ENCODE measurements at regions of chr19 and their contacts with region 1.

Region 1: DNA sequence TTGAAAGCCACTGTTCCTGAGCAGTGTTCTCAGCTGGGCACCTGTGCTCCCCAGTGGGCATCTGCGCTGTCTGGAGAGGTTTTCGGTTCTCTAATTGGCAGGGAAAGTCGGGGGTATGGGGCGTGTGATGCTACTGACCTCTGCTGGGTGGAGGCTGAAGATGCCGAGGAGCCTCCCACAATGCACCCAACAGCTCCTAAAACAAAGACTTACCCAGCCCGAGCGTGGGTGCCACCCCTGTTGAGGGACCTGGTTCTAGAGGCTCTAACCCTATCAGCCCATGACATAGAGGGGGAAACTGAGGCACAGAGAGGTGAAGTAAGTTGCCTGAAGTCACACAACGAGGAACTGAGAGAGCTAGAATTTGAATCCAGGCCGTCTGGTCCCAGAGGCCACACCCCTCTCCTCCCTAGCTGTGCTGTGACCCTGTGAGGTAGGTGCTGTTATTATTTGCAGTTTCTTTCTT is 2.3 kb downstream of the SPACA4 start:
- DNase-seq: peak; percentile 57 to 63 (median 60)
- H3K4me3 ChIP-seq: no peak overlapping the region
- H3K4me3 Mint-ChIP-seq: peak overlapping the region in 6 of 8 donors; percentile 24 to 73 (median 53)
- H3K27ac ChIP-seq: no peak overlapping the region
- H3K27ac Mint-ChIP-seq: peak overlapping the region in 5 of 7 donors; percentile 22 to 94 (median 73)
- H3K4me1 ChIP-seq: no peaks in the 10 kb centered on the region
- H3K4me1 Mint-ChIP-seq: peaks cover 2 to 6% (median 5%) of the 10 kb centered on the region in 4 donors
- H3K27me3 ChIP-seq: no peaks in the 10 kb centered on the region
- H3K27me3 Mint-ChIP-seq: no peaks in the 10 kb centered on the region

Region 2: GRCh38 chr19:48271531-48272151 is 337.2 kb before region 1 on chr19:
- CTCF ChIA-PET with region 1: interaction called, 3 read pairs
- POLR2A ChIA-PET with region 1: no interaction called
- intact Hi-C with region 1: loop called (anchors 2 kb)
- DNase-seq: no peak
- H3K4me3 ChIP-seq: peak overlapping the region in 1 of 2 donors; percentile 19
- H3K4me3 Mint-ChIP-seq: peak overlapping the region; percentile 70 to 90 (median 80)
- H3K27ac ChIP-seq: no peak overlapping the region
- H3K27ac Mint-ChIP-seq: peak overlapping the region in 2 of 7 donors; percentile 63 to 70
- H3K4me1 ChIP-seq: peaks cover 4% of the 10 kb centered on the region
- H3K4me1 Mint-ChIP-seq: peaks cover 5 to 24% (median 15%) of the 10 kb centered on the region in 4 donors
- H3K27me3 ChIP-seq: no peaks in the 10 kb centered on the region
- H3K27me3 Mint-ChIP-seq: peaks cover 8 to 12% of the 10 kb centered on the region in 2 donors

Region 3: DNA sequence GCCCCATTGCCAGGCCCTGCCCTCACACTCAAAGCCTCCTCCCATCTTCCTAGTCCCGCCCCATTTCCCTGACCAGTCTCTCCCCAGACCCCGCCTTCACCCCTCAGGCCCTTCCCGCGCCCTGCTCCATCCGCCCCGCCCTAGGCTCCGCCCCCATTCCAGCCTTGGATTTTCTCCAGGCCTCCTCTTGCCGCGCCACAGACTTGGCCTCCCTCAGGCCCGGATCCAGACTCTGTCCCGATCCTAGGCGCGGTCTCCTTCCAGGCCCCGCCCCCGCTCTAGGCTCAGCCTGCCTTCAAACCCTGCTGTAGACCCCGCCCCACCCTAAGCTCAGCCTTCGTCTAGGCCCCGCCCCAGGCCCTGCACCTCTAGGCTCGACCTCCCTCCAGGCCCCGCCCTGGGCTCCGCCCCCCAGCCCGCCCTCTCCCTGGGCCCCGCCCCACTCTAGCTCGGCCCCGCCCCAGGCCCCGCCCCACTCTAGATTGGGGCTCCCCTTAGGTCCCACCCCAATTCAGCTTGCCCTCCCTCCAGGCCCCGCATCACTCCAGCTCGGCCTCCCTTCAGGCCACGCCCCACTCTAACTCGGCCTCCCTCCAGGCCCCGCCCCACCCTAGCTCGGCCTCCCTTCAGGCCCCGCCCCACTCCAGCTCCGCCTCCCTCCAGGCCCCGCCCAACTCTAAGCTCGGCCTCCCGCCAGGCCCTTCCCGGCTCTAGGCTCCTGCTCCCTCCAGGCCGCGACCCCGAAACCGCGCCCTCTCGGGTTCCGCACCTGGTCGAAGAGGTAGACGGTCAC is 115.7 kb before region 1 on chr19:
- CTCF ChIA-PET with region 1: interaction called, 53 read pairs
- POLR2A ChIA-PET with region 1: interaction called, 6 read pairs
- intact Hi-C with region 1: loop called (anchors 1 kb)
- DNase-seq: peak; percentile 75 to 87 (median 77)
- H3K4me3 ChIP-seq: peak overlapping the region in 1 of 2 donors; percentile 47
- H3K4me3 Mint-ChIP-seq: peak overlapping the region; percentile 52 to 79 (median 70)
- H3K27ac ChIP-seq: no peak overlapping the region
- H3K27ac Mint-ChIP-seq: peak overlapping the region in 5 of 7 donors; percentile 51 to 84 (median 60)
- H3K4me1 ChIP-seq: peaks cover 40% of the 10 kb centered on the region
- H3K4me1 Mint-ChIP-seq: peaks cover 15 to 53% (median 28%) of the 10 kb centered on the region in 4 donors
- H3K27me3 ChIP-seq: peaks cover 15% of the 10 kb centered on the region
- H3K27me3 Mint-ChIP-seq: peaks cover 22 to 28% of the 10 kb centered on the region in 2 donors

Region 4: GRCh38 chr19:48501496-48502350 is 107.1 kb before region 1 on chr19:
- CTCF ChIA-PET with region 1: interaction called, 37 read pairs
- POLR2A ChIA-PET with region 1: interaction called, 13 read pairs
- intact Hi-C with region 1: loop called (anchors 1 kb)
- DNase-seq: peak; percentile 68 to 82 (median 76)
- H3K4me3 ChIP-seq: no peak overlapping the region
- H3K4me3 Mint-ChIP-seq: peak overlapping the region; percentile 22 to 82 (median 76)
- H3K27ac ChIP-seq: peak overlapping the region; percentile 26
- H3K27ac Mint-ChIP-seq: peak overlapping the region in 6 of 7 donors; percentile 48 to 87 (median 78)
- H3K4me1 ChIP-seq: peaks cover 13% of the 10 kb centered on the region
- H3K4me1 Mint-ChIP-seq: peaks cover 5 to 27% (median 14%) of the 10 kb centered on the region in 4 donors
- H3K27me3 ChIP-seq: no peaks in the 10 kb centered on the region
- H3K27me3 Mint-ChIP-seq: peaks cover 4 to 10% of the 10 kb centered on the region in 2 donors

Region 5: GRCh38 chr19:48513289-48514122 is 95.3 kb before region 1 on chr19:
- CTCF ChIA-PET with region 1: interaction called, 37 read pairs
- POLR2A ChIA-PET with region 1: interaction called, 7 read pairs
- intact Hi-C with region 1: loop called (anchors 1 kb)
- DNase-seq: peak; percentile 70 to 88 (median 73)
- H3K4me3 ChIP-seq: peak overlapping the region; percentile 65 to 89
- H3K4me3 Mint-ChIP-seq: no peak overlapping the region
- H3K27ac ChIP-seq: peak overlapping the region; percentile 59
- H3K27ac Mint-ChIP-seq: peak overlapping the region in 3 of 7 donors; percentile 68 to 96 (median 91)
- H3K4me1 ChIP-seq: peaks cover 27% of the 10 kb centered on the region
- H3K4me1 Mint-ChIP-seq: peaks cover 6 to 16% (median 11%) of the 10 kb centered on the region in 4 donors
- H3K27me3 ChIP-seq: no peaks in the 10 kb centered on the region
- H3K27me3 Mint-ChIP-seq: no peaks in the 10 kb centered on the region

Region 6: GRCh38 chr19:48595833-48596232 is 13.0 kb before region 1 on chr19:
- CTCF ChIA-PET with region 1: interaction called, 82 read pairs
- POLR2A ChIA-PET with region 1: interaction called, 3 read pairs
- intact Hi-C with region 1: no loop called
- DNase-seq: no peak
- H3K4me3 ChIP-seq: no peak overlapping the region
- H3K4me3 Mint-ChIP-seq: peak overlapping the region in 5 of 8 donors; percentile 36 to 86 (median 64)
- H3K27ac ChIP-seq: peak overlapping the region; percentile 54
- H3K27ac Mint-ChIP-seq: peak overlapping the region; percentile 52 to 88 (median 73)
- H3K4me1 ChIP-seq: peaks cover 22% of the 10 kb centered on the region
- H3K4me1 Mint-ChIP-seq: peaks cover 8 to 40% (median 14%) of the 10 kb centered on the region in 4 donors
- H3K27me3 ChIP-seq: no peaks in the 10 kb centered on the region
- H3K27me3 Mint-ChIP-seq: peaks cover 0 to 3% of the 10 kb centered on the region in 2 donors

Region 7: DNA sequence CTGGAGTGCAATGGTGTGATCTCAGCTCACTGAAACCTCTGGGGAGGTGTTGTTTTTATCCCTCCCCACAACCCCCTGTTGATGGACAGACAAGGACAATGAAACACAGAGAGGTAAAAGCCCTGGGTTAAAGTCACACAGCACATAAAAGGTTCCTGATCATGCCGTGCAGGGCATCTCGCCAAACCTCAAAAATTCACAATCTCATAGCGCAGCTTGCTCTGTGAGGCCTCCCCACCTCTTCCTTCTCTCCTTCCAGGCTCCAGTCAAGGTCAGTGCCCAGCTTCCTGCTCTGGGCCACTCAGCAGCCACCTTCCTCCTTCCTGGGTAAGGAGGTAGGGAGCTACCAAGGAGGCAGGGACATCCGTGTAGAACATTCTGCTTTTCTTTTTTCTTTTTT is 89.2 kb after region 1 on chr19:
- CTCF ChIA-PET with region 1: no interaction called
- POLR2A ChIA-PET with region 1: no interaction called
- intact Hi-C with region 1: no loop called
- DNase-seq: no peak
- H3K4me3 ChIP-seq: no peak overlapping the region
- H3K4me3 Mint-ChIP-seq: no peak overlapping the region
- H3K27ac ChIP-seq: no peak overlapping the region
- H3K27ac Mint-ChIP-seq: no peak overlapping the region
- H3K4me1 ChIP-seq: peaks cover 7% of the 10 kb centered on the region
- H3K4me1 Mint-ChIP-seq: peaks cover 3 to 17% (median 7%) of the 10 kb centered on the region in 4 donors
- H3K27me3 ChIP-seq: peaks cover 7% of the 10 kb centered on the region
- H3K27me3 Mint-ChIP-seq: peaks cover 0 to 8% of the 10 kb centered on the region in 2 donors